GM13977 (cell line): ENCODE measurements at regions of chr6 and their contacts with region 1.

Region 1: GRCh38 chr6:7725849-7726415 is at the start of gene BMP6:
- DNase-seq: peak; percentile 92
- CTCF ChIP-seq: no peak

Region 2: GRCh38 chr6:7604506-7604905 is 121.4 kb before region 1 on chr6:
- in situ Hi-C with region 1: no loop called
- DNase-seq: no peak
- CTCF ChIP-seq: no peak

Region 3: DNA sequence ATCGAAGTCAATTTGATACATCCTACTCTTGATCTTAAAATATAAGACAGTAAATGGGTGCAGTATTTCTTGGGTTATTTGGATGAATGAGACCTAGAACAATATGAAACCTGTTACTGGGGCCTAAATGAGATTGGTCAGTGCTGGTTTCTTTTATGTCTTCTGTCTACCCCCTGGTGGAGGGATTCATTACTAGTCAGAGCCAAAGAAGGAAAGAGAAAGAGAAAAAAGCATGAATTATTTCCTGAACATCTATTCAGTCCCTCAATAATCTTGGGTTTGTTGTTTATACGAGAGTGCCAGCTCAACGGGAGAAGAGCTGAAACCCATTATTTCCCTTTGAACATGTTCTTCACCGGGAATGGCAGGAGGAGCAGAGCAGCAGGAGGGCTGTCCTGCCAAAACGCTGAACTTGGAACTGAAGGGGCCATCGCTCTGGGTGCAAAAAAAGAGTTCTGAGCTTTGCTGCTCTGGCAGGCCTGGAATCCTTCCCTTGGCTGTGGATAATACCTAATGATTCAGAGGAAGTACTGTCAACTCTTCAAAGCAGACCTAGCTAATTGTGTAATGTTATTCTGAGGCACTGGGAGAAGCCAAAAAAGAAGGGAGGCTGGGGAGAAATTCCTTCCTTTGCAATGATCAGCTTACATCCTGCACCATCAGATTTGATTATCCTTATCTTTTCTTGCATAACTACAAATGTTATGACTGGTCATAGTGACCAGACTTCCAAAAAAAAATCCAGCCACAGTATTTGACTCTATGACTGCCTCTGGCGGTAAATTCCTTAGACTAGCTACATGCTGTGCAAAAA is 266.3 kb after region 1 on chr6:
- in situ Hi-C with region 1: loop called (anchors 10 kb)
- DNase-seq: peak; percentile 78
- CTCF ChIP-seq: peak; percentile 53

Region 4: DNA sequence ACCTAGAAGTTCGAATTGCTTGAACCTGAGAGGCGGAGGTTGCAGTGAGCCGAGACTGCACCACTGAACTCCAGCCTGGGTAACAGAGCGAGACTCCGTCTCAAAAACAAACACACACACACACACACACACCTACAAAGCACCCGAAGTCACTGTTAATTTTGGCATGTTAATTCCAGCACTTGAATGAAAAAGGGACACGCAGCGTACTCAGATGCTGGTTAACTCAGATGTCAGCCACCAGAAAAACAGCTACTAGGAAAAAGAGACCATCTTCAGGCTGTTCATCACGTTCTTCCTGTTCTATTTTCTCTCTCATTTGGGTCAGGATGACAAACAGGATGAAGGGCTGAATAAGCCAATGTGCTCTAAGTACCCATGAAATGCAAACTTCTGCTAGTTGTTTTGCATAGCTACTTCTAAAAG is 291.4 kb after region 1 on chr6:
- in situ Hi-C with region 1: no loop called
- DNase-seq: no peak
- CTCF ChIP-seq: no peak

Region 5: DNA sequence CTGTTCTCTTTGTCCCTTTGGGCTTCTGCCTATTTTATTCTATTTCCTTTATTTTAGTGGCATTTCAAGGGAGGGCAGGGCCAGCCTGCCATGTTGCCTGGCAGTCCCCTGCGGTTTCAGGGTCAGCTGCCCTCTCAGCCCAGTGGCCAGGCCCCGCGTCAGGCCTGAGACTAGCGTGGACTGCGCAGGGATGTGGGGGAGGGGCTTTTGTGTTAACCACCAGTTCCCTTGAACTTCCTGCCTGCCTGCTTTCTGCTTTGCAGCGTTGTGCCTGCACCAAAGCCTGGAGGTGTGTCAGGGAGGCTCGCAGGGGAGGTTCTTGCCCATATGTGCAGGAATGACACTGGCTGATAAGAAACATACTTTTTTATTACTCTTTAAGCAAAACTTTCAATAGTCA is 551.8 kb after region 1 on chr6:
- in situ Hi-C with region 1: no loop called
- DNase-seq: no peak
- CTCF ChIP-seq: no peak